ENCODE measurements at regions of chr9 and their contacts with region 1.

Region 1: DNA sequence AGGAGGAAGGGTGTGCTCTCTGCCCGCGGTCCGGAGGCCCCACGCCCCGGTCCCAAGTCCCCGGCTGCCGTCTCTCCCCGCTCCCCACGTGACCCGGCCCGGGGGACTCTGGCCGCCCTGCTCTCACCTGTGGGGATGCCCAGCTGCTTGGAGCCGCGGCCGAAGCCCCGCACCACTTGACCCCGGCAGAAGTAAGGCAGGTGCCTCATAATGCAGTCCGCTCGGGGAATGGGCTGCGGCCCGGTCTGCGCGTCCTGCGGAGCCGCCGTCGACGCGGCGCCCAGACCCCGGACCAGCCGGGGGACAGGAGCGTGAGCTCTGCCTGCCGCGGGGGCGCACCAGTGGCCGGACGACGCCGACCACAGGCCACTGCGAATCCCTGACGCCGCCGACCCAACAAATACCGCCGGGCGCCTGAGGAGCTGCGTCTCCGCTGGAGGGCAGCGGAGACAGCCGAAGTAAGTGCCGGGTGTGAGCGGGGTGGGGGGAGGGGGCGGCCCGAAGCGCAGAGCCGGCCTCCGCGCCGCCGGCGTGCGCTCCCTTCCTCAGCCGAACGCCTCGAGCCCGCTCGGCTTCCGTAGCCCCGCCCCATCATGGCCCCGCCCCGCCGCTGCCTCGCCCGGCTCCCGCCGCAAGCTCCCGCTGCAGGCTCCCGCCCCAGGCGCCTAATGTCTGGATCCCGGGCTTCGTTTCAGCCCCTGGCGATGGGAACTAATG is at the start of gene RFK:
- DNase-seq: peak; percentile 82 to 97
- H3K4me3 ChIP-seq: peak within 1 kb of the TSS; percentile 79
- H3K27ac ChIP-seq: peak within 1 kb of the TSS; percentile 85
- H3K4me1 ChIP-seq: peaks cover 22% of the 10 kb centered on the region
- H3K27me3 ChIP-seq: no peaks in the 10 kb centered on the region
- CTCF ChIP-seq: peak; percentile 53; the same call in 1 of the 2 replicates
- total RNA-seq, gene RFK: 20.6 and 24.4 TPM in 2 replicates

Region 2: DNA sequence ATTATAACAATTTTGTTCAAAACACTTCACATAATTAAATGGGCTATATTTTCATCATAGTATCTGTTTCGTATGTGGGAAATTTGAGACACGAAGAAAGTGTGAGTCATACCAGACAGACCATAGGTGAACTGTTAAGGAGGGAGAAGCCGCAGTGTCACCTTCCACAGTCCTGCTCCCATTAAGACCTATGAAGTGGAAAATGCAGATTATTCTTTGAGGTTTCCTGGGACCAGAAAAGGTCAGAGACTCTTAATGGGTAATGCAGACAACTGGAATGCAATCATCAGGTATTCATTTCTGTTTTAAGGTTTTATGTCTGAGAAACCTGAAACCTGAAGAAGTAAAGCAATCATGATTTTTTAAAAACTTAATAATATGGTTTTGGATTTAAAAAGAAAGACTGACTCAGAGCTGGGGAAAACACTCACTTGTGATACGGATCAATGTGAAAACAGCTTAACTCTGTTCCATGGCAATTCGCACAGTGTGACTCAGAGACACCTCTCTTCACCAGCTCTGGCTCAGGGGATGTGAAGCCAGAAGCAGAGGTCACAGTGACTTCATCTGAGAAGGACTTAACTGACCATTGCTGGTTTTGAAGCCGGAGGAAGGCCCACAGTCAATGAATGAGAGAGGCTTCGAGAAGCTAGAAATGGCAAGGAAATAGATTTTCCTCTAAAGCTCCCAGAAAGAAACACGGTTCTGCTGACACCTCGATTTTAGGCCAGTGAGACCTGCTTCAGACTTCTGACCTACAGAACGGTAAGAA is 47.6 kb after region 1 on chr9:
- CTCF ChIA-PET with region 1: no interaction called
- POLR2A ChIA-PET with region 1: interaction called, 4 read pairs
- intact Hi-C with region 1: loop called (anchors 2 kb)
- DNase-seq: peak; percentile 53 to 84
- H3K4me3 ChIP-seq: no peak overlapping the region
- H3K27ac ChIP-seq: peak overlapping the region; percentile 86
- H3K4me1 ChIP-seq: peaks cover 22% of the 10 kb centered on the region
- H3K27me3 ChIP-seq: no peaks in the 10 kb centered on the region
- CTCF ChIP-seq: no peak

Region 3: GRCh38 chr9:76704593-76705204 is 310.6 kb after region 1 on chr9:
- CTCF ChIA-PET with region 1: interaction called, 4 read pairs
- POLR2A ChIA-PET with region 1: no interaction called
- intact Hi-C with region 1: loop called (anchors 5 kb)
- DNase-seq: peak; percentile 25 to 64
- H3K4me3 ChIP-seq: no peak overlapping the region
- H3K27ac ChIP-seq: no peak overlapping the region
- H3K4me1 ChIP-seq: no peaks in the 10 kb centered on the region
- H3K27me3 ChIP-seq: peaks cover 50% of the 10 kb centered on the region
- CTCF ChIP-seq: peak; percentile 85